ENCODE measurements at regions of chr3 and their contacts with region 1.

Region 1: GRCh38 chr3:47420511-47421484 is 40.0 kb downstream of the PTPN23 start:
- DNase-seq: peak; percentile 95
- ATAC-seq: peak; percentile 95
- H3K4me3 Mint-ChIP-seq: peak overlapping the region; percentile 55
- H3K27ac Mint-ChIP-seq: peak overlapping the region; percentile 98
- H3K4me1 Mint-ChIP-seq: peaks cover 20% of the 10 kb centered on the region
- H3K27me3 Mint-ChIP-seq: no peaks in the 10 kb centered on the region

Region 2: GRCh38 chr3:47380601-47381316 is 40.0 kb before region 1 on chr3 and contains the start of gene PTPN23:
- CTCF ChIA-PET with region 1: interaction called, 16 read pairs
- DNase-seq: peak; percentile 99
- ATAC-seq: peak; percentile 82
- H3K4me3 Mint-ChIP-seq: peak within 1 kb of the TSS; percentile 92
- H3K27ac Mint-ChIP-seq: peak within 1 kb of the TSS; percentile 100
- H3K4me1 Mint-ChIP-seq: peaks cover 45% of the 10 kb centered on the region
- H3K27me3 Mint-ChIP-seq: no peaks in the 10 kb centered on the region
- total RNA-seq, gene PTPN23: 27.0 to 32.9 TPM

Region 3: GRCh38 chr3:47475570-47476329 is 55.0 kb after region 1 on chr3 and contains the start of gene SCAP:
- CTCF ChIA-PET with region 1: interaction called, 89 read pairs
- DNase-seq: peak; percentile 97
- ATAC-seq: peak; percentile 94
- H3K4me3 Mint-ChIP-seq: peak within 1 kb of the TSS; percentile 89
- H3K27ac Mint-ChIP-seq: peak within 1 kb of the TSS; percentile 81
- H3K4me1 Mint-ChIP-seq: peaks cover 31% of the 10 kb centered on the region
- H3K27me3 Mint-ChIP-seq: no peaks in the 10 kb centered on the region
- total RNA-seq, gene SCAP: 65.5 to 69.2 TPM

Region 4: DNA sequence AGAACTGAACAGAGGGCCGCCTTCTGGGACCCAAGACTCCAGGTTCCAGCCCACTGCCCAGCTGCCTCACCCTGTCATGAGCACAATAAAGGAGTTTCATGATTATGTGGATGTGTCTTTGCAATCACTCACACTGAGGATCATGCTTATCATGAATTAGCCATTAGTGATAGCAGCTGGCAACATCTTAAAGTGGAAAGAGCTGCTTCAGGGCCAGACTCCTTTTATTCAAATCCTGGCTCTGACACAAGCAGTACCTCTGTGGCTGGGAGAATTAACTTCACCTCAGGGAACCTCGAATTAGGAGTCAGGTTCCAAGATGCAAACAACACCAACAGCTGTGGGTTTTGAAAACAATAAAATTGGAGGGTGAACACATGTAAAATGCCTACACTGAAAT is 61.6 kb after region 1 on chr3:
- CTCF ChIA-PET with region 1: interaction called, 89 read pairs
- DNase-seq: no peak
- ATAC-seq: no peak
- H3K4me3 Mint-ChIP-seq: no peak overlapping the region
- H3K27ac Mint-ChIP-seq: no peak overlapping the region
- H3K4me1 Mint-ChIP-seq: no peaks in the 10 kb centered on the region
- H3K27me3 Mint-ChIP-seq: no peaks in the 10 kb centered on the region

Region 5: GRCh38 chr3:47513125-47513929 is 92.5 kb after region 1 on chr3 and contains the start of gene ELP6:
- CTCF ChIA-PET with region 1: interaction called, 15 read pairs
- DNase-seq: peak; percentile 99
- ATAC-seq: peak; percentile 96
- H3K4me3 Mint-ChIP-seq: peak within 1 kb of the TSS; percentile 97
- H3K27ac Mint-ChIP-seq: peak within 1 kb of the TSS; percentile 99
- H3K4me1 Mint-ChIP-seq: peaks cover 21% of the 10 kb centered on the region
- H3K27me3 Mint-ChIP-seq: no peaks in the 10 kb centered on the region
- total RNA-seq, gene ELP6: 46.6 to 48.8 TPM

Region 6: DNA sequence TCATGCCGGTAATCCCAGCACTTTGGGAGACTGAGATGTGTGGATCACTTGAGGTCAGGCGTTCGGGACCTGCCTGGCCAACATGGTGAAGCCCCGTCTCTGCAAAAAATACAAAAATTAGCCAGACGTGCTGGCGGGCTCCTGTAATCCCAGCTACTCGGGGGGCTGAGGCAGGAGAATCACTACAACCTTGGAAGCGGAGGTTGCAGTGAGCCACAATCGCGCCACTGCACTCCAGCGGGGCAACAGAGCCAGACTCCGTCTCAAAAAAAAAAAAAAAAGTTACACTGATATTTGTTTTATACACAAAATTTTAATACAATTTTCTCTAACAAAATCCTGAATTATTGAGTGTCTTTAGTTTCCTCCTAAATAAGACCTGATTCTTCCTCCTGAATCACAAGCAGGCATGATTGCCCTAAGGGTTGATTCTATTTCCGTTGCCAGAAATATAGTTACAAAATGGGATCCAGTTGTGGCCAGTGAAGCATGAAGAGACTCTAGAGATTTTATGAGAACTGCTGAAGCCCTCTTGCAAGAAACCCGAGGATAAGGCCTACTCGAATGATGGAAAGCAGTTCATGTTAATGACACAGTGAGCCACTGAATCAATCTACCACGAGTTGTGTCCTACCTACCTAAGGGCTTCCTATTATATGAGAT is 370.5 kb after region 1 on chr3:
- CTCF ChIA-PET with region 1: interaction called, 13 read pairs
- DNase-seq: no peak
- ATAC-seq: no peak
- H3K4me3 Mint-ChIP-seq: no peak overlapping the region
- H3K27ac Mint-ChIP-seq: no peak overlapping the region
- H3K4me1 Mint-ChIP-seq: peaks cover 2% of the 10 kb centered on the region
- H3K27me3 Mint-ChIP-seq: no peaks in the 10 kb centered on the region

Measured in activated CD8-positive, alpha-beta memory T cell treated with anti-CD3 and anti-CD28 coated beads, Interleukin-2, amount 10 ng/mL, durations not matched to agents 7 days and 5 days (primary cell).